Mucosa of descending colon (tissue), 3 donors: ENCODE measurements at regions of chr2 and their contacts with region 1.

Region 1: GRCh38 chr2:172704072-172704936 is 31.3 kb upstream of the RAPGEF4 start:
- DNase-seq: peak in 1 of 3 donors; percentile 54
- ATAC-seq: peak; percentile 70
- H3K4me3 ChIP-seq: no peak overlapping the region
- H3K4me1 ChIP-seq: no peaks in the 10 kb centered on the region
- CTCF ChIP-seq: peak; percentile 23

Region 2: GRCh38 chr2:172606285-172606684 is 98.0 kb before region 1 on chr2:
- intact Hi-C with region 1: loop called in 1 of 2 experiments (anchors 10 kb)
- DNase-seq: no peak
- ATAC-seq: no peak
- H3K4me3 ChIP-seq: no peak overlapping the region
- H3K4me1 ChIP-seq: no peaks in the 10 kb centered on the region
- CTCF ChIP-seq: no peak